ENCODE measurements at regions of chr2 and their contacts with region 1.

Region 1: GRCh38 chr2:222318026-222318711 is 19.4 kb upstream of the PAX3 start:
- DNase-seq: no peak
- H3K4me3 ChIP-seq: peak overlapping the region; percentile 30 to 52
- H3K27ac ChIP-seq: no peak overlapping the region
- H3K4me1 ChIP-seq: peaks cover 0 to 24% (median 17%) of the 10 kb centered on the region in 4 donors
- H3K27me3 ChIP-seq: peaks cover 0 to 65% of the 10 kb centered on the region in 2 donors
- CTCF ChIP-seq: no peak

Region 2: GRCh38 chr2:222160944-222161343 is 157.2 kb before region 1 on chr2:
- intact Hi-C with region 1: no loop called
- DNase-seq: no peak
- H3K4me3 ChIP-seq: no peak overlapping the region
- H3K27ac ChIP-seq: no peak overlapping the region
- H3K4me1 ChIP-seq: no peaks in the 10 kb centered on the region
- H3K27me3 ChIP-seq: no peaks in the 10 kb centered on the region
- CTCF ChIP-seq: no peak

Region 3: DNA sequence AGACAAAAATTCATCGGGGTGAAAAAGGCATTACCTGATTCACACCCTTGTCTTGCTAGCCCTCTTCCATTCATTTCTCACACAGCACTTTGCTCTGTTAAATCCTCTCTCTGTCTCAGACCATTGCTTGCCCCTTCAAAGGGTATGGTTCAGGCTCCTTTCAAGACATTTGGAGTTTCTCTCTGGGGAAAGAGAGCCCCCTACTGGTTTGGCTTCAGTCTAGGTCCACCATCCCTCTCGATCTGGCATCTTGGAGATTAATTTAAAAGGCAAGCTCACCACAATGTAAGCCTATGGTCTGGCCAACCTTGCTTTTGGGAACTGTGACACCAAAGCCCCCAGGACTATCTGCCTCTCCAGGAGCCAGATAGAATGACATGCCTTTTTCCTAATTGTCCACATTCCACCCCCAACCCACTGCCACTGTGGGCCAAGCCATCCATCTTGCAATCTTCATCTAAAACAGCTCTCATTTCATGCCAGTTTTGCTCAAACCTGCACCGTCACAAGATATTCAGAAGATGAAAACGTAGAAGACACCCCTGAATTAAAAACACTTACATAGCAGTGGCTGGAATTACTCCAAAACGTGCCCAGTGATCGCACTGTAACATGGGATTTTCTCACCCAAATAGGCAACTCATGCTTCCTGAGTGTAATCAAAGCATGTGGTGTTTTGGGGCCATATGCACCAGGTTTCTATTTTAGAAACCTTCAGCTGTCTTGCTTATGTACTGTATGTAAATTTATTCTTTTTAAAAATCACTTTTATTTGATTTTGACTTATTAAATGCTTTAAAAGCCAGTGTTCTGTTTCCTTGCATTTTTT is 243.9 kb after region 1 on chr2:
- intact Hi-C with region 1: loop called (anchors 5 kb)
- DNase-seq: no peak
- H3K4me3 ChIP-seq: no peak overlapping the region
- H3K27ac ChIP-seq: no peak overlapping the region
- H3K4me1 ChIP-seq: no peaks in the 10 kb centered on the region
- H3K27me3 ChIP-seq: no peaks in the 10 kb centered on the region
- CTCF ChIP-seq: peak in 1 of 2 experiments; percentile 14